PC-9 (cell line): ENCODE measurements at regions of chr5 and their contacts with region 1.

Region 1: GRCh38 chr5:88140856-88141752 is 127.5 kb downstream of the TMEM161B start:
- DNase-seq: peak; percentile 93 to 97
- H3K4me3 ChIP-seq: peak overlapping the region; percentile 68
- H3K27ac ChIP-seq: no peak overlapping the region
- H3K4me1 ChIP-seq: peaks cover 7% of the 10 kb centered on the region; the same call in 1 of the 2 replicates
- H3K27me3 ChIP-seq: no peaks in the 10 kb centered on the region
- CTCF ChIP-seq: peak; percentile 65

Region 2: DNA sequence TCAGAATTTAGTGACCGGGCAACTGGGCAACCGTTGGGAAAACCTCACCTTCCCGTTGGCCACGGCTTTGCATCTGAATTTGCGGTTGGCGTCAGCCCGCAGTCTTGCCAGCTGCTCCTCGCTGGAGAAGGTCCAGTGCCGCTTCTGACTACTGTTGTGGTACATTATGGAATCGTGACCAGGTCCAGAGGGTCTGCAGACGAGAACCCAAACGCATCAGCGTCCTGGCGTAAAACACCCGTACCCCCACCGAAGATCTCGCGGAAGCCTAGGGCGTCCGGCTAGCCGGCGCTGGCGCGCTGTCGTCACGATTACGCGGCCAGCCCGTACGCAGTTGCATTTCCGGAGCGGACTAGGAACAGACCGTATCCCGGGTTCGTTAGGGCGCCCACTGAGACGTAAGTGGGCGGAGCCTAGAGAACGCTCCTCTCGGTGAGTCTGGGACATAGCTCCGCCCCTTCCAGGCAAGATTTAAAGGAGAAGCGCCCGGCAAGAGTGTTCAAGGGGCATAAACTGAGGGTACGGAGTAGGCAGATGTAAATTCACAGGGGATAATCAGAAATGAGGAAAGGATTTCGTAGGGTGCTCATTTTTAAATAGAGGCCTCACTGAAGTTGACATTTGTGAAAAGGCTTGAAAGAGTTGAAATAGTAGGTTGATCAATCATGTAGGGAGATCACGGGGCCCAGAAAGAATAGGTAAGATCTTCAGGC is 728.3 kb before region 1 on chr5 and contains the start of gene CCNH:
- CTCF ChIA-PET with region 1: no interaction called
- POLR2A ChIA-PET with region 1: no interaction called
- intact Hi-C with region 1: loop called (anchors 5 kb)
- DNase-seq: peak; percentile 95
- H3K4me3 ChIP-seq: peak within 1 kb of the TSS; percentile 89
- H3K27ac ChIP-seq: peak within 1 kb of the TSS; percentile 55
- H3K4me1 ChIP-seq: peaks cover 13% of the 10 kb centered on the region
- H3K27me3 ChIP-seq: no peaks in the 10 kb centered on the region
- CTCF ChIP-seq: no peak
- total RNA-seq, gene CCNH: 38.5 and 43.9 TPM in 2 replicates

Region 3: GRCh38 chr5:87829217-87829551 is 311.9 kb before region 1 on chr5:
- CTCF ChIA-PET with region 1: interaction called, 16 read pairs
- POLR2A ChIA-PET with region 1: no interaction called
- intact Hi-C with region 1: no loop called
- DNase-seq: peak; percentile 41 to 63
- H3K4me3 ChIP-seq: no peak overlapping the region
- H3K27ac ChIP-seq: no peak overlapping the region
- H3K4me1 ChIP-seq: peaks cover 7% of the 10 kb centered on the region; the same call in 1 of the 2 replicates
- H3K27me3 ChIP-seq: no peaks in the 10 kb centered on the region
- CTCF ChIP-seq: no peak

Region 4: DNA sequence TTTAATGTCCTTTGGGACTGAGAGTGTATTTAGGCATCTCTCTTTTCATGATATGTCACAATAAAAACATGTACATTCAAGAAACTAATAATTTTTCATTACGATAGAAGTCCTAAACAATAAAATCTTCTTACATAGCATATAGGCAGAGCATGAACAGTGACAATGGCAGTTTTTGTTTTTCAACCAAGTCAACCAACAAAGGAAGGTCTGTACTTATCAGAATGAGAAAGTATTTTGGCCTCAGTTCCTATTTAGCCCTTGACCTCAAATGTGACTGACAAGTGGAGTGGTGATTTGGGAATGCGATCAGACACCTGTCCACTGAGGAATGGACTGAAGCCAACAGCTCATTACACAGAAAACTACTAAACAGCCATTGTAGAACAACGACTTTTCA is 91.9 kb before region 1 on chr5:
- CTCF ChIA-PET with region 1: no interaction called
- POLR2A ChIA-PET with region 1: no interaction called
- intact Hi-C with region 1: loop called (anchors 1 kb)
- DNase-seq: no peak
- H3K4me3 ChIP-seq: no peak overlapping the region
- H3K27ac ChIP-seq: no peak overlapping the region
- H3K4me1 ChIP-seq: peaks cover 14% of the 10 kb centered on the region; the same call in 1 of the 2 replicates
- H3K27me3 ChIP-seq: no peaks in the 10 kb centered on the region
- CTCF ChIP-seq: no peak

Region 5: DNA sequence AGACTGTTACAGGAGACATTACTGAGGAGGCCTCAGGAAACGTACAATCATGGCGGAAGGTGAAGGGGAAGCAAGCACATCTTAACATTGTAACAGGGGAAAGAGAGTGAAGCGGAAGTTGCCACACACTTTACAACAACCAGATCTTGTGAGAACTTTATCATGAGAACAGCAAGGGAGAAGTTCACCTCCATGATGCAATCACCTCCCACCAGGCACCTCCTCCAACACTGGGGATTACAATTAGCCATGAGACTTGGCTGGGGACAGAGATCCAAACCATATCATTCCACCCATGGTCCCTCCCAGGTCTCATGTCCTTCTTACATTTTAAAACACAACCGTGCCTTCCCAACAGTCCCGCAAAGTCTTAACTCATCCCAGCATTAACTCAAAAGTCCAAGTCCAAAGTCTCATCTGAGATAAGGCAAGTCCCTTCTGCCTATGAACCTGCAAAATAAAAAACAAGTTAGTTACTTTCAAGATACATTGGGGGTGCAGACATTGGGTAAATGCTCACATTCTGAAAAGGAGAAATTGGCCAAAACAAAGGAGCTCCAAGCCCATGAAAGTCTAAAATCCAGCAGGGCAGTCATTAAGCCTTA is 10.8 kb before region 1 on chr5:
- CTCF ChIA-PET with region 1: no interaction called
- POLR2A ChIA-PET with region 1: no interaction called
- intact Hi-C with region 1: no loop called
- DNase-seq: no peak
- H3K4me3 ChIP-seq: no peak overlapping the region
- H3K27ac ChIP-seq: no peak overlapping the region
- H3K4me1 ChIP-seq: no peaks in the 10 kb centered on the region
- H3K27me3 ChIP-seq: no peaks in the 10 kb centered on the region
- CTCF ChIP-seq: no peak

Region 6: DNA sequence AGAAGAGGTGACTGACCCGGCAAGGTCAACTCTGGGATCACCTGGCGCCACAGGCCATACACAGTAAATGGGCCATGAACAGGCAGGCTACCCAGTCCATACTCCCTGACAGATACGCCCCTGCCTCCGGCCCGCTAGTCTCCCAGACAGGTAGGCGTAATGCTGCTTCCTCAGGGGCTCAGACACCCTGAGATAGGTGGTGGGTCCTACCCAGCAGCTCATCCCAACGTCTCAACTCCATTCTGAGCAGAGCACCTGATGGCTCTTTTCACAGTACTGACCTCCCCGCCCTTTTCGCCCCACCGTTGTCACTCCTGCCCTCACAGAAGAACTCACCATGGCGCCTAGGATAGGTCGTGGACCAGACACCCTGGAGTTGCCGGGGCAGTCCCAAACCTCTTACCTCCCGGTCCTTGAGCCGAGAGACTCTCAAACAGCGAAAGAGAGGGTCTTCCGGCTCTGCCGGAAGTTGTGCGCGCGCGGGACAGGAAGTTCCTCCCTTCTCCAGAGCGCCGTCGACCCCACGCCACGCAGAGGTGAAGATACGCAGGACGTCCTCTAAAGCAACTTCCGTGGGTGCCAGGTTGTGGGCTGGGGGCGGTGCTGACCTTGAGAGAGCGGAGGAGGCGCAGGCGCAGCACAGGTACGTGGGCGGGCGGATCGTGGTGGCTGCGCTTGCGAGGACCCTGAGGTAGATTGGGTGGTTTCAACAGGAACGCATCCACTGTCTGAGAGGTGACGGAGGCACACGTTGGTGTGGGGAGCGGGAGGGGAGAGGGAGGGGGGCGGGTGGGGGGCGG is 127.5 kb after region 1 on chr5 and contains the start of gene TMEM161B:
- CTCF ChIA-PET with region 1: no interaction called
- POLR2A ChIA-PET with region 1: no interaction called
- intact Hi-C with region 1: loop called (anchors 2 kb)
- DNase-seq: peak; percentile 87 to 93
- H3K4me3 ChIP-seq: peak within 1 kb of the TSS; percentile 93
- H3K27ac ChIP-seq: peak within 1 kb of the TSS; percentile 58
- H3K4me1 ChIP-seq: peaks cover 33% of the 10 kb centered on the region
- H3K27me3 ChIP-seq: no peaks in the 10 kb centered on the region
- CTCF ChIP-seq: no peak
- total RNA-seq, gene TMEM161B: 17.3 and 24.8 TPM in 2 replicates